ENCODE measurements at regions of chr4 and their contacts with region 1.

Region 1: DNA sequence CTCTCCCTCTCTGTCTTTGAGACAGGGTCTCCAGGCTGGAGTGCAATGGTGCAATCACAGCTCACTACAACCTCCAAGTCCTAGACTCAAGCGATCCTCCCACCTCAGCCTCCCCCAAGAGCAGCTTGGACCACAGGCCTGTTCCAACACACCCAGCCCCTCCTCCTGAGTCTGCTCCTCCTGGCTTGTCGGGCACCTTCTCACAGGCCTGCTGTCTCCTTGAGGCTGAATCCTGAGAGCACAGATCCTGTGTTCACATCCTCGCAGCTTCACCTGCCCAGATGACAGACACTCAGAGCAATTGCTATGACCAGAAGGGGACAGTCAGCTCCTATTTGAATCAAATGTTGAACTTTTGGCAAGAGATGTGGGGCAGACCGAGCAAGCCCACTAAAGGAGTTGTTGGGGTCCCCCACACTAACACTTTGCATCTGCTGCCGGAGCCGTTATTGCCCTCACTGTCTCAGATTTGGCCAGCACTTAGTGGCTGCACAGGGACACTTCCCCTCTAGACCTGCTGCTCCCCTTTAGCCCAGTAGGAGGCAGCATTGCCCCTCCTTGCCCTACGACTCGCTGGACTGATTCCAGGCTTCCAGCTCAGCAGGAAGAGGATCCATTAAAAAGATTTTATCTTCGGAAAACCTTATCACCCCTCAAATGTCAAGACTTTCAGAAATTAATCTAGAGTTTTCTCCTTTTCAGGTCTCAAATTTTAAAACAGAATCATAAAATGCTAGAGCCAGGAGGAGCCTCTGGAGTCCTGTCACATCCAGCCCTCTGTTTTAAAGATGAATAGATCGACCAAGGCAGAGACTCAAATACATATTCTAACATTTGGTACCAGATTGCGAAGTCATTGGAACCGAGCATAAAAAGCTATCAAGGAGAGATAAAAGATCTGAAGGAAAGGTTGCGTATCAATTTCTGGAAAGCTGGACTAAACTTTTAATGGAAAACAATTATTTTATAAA is 113.7 kb downstream of the USP46 start:
- DNase-seq: no peak
- H3K4me3 ChIP-seq: no peak overlapping the region
- H3K27me3 ChIP-seq: peaks cover 3% of the 10 kb centered on the region; the same call in 1 of the 2 replicates
- CTCF ChIP-seq: peak; percentile 97

Region 2: GRCh38 chr4:52376132-52376704 is 169.2 kb before region 1 on chr4:
- CTCF ChIA-PET with region 1: interaction called, 16 read pairs
- POLR2A ChIA-PET with region 1: no interaction called
- DNase-seq: peak; percentile 4
- H3K4me3 ChIP-seq: no peak overlapping the region
- H3K27me3 ChIP-seq: no peaks in the 10 kb centered on the region; the same call in 1 of the 2 replicates
- CTCF ChIP-seq: peak; percentile 45

Region 3: DNA sequence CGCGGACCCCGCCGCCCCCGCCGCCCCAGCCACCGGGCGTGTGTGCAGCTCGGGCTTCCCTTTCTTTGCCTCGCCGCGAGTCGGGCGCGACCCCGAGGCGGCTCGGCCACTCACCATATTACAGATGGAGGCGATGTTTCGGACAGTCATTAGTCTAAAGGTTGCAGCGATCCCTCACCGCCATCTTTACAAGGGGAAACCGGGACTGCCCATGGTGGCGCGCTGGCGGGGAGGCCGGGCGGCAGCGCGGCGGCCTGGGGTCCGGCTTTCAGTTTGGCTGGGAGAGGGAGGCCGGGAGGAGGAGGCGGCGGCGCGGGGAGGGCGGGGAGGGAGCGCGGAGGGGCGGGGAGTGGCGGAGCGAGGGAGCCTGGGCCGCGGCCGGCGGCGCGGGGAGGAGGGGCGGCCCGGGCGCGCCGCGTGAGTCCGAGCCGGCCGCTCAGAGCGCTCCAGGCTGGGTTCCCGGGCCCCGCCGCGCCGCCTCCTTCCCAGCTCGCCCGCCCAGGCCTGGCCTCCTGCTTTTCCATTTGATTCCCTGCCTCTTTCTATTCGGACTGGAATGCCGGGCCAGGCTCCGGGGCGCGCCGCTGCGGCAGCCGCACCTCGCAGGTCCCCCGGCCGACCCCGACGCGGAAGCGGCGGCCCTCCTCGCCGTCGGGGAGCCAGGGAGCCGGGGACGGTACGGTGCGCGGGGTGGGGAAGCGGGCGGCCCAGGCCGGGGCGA is 113.8 kb after region 1 on chr4 and contains the start of gene USP46:
- CTCF ChIA-PET with region 1: interaction called, 20 read pairs
- POLR2A ChIA-PET with region 1: no interaction called
- DNase-seq: no peak
- H3K4me3 ChIP-seq: peak within 1 kb of the TSS; percentile 82
- H3K27me3 ChIP-seq: no peaks in the 10 kb centered on the region
- CTCF ChIP-seq: no peak
- polyA plus RNA-seq, gene USP46: 12.5 and 16.8 TPM in 2 replicates

Region 4: GRCh38 chr4:52712172-52712990 is 167.0 kb after region 1 on chr4:
- CTCF ChIA-PET with region 1: interaction called, 15 read pairs
- POLR2A ChIA-PET with region 1: no interaction called
- DNase-seq: peak; percentile 72
- H3K4me3 ChIP-seq: peak overlapping the region; percentile 76
- H3K27me3 ChIP-seq: peaks cover 3% of the 10 kb centered on the region; the same call in 1 of the 2 replicates
- CTCF ChIP-seq: no peak

Region 5: DNA sequence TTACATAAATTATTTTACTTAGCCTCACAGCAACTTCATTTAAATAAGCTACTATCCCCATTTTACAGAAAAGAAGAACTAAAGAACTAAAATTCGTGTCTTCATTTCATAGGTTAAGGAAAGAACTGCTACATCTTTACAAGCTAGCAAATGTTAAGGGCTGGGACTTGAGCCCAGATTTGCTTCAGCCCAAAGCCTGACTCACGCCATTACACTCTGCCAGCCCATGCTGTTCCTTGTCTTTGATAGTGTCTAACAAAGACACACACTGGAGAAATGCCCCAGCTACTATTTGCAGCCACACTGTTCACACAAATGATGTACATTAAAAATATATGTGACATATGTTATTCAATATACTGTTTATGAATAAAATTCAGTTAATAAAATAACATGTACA is 234.8 kb after region 1 on chr4:
- CTCF ChIA-PET with region 1: no interaction called
- POLR2A ChIA-PET with region 1: no interaction called
- DNase-seq: peak; percentile 15
- H3K4me3 ChIP-seq: no peak overlapping the region
- H3K27me3 ChIP-seq: no peaks in the 10 kb centered on the region
- CTCF ChIP-seq: no peak

Region 6: GRCh38 chr4:52976523-52977230 is 431.3 kb after region 1 on chr4:
- CTCF ChIA-PET with region 1: interaction called, 105 read pairs
- POLR2A ChIA-PET with region 1: no interaction called
- DNase-seq: no peak
- H3K4me3 ChIP-seq: no peak overlapping the region
- H3K27me3 ChIP-seq: no peaks in the 10 kb centered on the region
- CTCF ChIP-seq: no peak